Activated CD8-positive, alpha-beta T cell treated with anti-CD3 and anti-CD28 coated beads for 36 hours (primary cell): ENCODE measurements at regions of chr1 and their contacts with region 1.

Region 1: GRCh38 chr1:3012456-3013291 is 8.6 kb upstream of the ACTRT2 start:
- DNase-seq: peak; percentile 58
- ATAC-seq: peak; percentile 75
- H3K4me3 Mint-ChIP-seq: no peak overlapping the region
- H3K27ac Mint-ChIP-seq: no peak overlapping the region
- H3K4me1 Mint-ChIP-seq: peaks cover 2% of the 10 kb centered on the region
- H3K27me3 Mint-ChIP-seq: peaks cover 8% of the 10 kb centered on the region
- CTCF ChIP-seq: peak; percentile 98

Region 2: DNA sequence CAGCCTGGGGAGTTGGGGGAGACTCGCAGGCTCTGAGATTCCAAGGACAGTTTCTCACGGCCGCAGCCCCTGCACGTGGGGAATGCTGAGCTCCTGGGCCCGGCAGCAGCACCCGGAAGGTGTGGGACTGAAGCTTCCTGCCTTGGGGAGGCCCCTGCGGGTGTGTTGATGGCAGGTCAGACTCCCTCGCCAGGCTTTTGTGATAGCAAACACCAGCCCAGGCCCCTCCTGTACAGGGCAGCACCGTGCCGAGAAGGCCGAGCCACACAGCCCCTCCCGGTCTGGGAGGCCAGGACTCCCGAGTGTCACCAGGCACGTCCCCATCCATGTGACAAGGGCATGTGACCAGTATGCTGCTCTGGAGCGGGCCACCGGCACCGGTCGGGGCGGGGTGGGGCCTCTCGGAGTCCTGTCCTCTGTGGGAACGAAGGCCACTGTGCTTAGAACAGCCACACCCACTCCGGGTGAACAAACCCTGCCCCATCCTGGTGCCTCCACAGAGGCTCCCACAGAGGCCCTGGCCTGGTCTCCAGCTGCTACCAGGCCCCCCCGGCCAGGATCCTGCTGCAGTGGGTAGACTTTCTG is 410.7 kb after region 1 on chr1:
- CTCF ChIA-PET with region 1: interaction called, 9 read pairs
- POLR2A ChIA-PET with region 1: no interaction called
- intact Hi-C with region 1: loop called (anchors 10 kb)
- DNase-seq: no peak
- ATAC-seq: no peak
- H3K4me3 Mint-ChIP-seq: no peak overlapping the region
- H3K27ac Mint-ChIP-seq: no peak overlapping the region
- H3K4me1 Mint-ChIP-seq: no peaks in the 10 kb centered on the region
- H3K27me3 Mint-ChIP-seq: peaks cover 3% of the 10 kb centered on the region
- CTCF ChIP-seq: no peak